Calu3 (cell line): ENCODE measurements at regions of chr4 and their contacts with region 1.

Region 1: GRCh38 chr4:176054942-176055341 is 10.7 kb upstream of the WDR17 start:
- DNase-seq: no peak
- H3K4me3 Mint-ChIP-seq: no peak overlapping the region
- H3K27ac Mint-ChIP-seq: no peak overlapping the region
- H3K4me1 Mint-ChIP-seq: no peaks in the 10 kb centered on the region
- H3K27me3 Mint-ChIP-seq: no peaks in the 10 kb centered on the region
- CTCF ChIP-seq: no peak

Region 2: DNA sequence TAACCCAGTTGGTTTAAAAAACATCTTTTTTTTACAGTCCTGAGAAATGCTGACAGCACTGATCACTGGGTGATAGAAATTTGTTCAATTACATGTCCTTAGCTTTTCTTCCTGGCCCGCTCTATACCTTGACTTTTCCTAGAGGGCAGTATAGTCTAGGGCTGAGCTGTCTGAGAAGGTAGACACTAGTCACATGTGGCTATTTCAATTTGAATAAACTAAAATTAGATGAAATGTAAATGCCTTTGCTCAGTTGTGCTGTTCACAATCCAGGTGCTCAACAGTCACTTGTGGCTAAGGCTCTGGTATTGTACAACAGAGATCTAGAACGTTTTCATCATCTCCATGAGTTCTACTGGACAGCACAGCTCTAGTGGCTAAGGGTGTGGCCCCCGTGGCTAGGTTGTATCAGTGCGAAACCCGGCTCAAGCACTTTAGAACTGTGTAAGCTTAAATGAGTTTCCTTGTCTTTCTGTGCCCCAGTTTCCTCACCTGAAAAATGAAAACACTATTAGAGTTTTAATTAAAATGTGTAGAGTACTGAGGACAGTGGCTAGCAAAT is 100.9 kb before region 1 on chr4:
- CTCF ChIA-PET with region 1: no interaction called
- intact Hi-C with region 1: loop called (anchors 10 kb)
- DNase-seq: no peak
- H3K4me3 Mint-ChIP-seq: no peak overlapping the region
- H3K27ac Mint-ChIP-seq: no peak overlapping the region
- H3K4me1 Mint-ChIP-seq: peaks cover 8% of the 10 kb centered on the region
- H3K27me3 Mint-ChIP-seq: no peaks in the 10 kb centered on the region
- CTCF ChIP-seq: no peak

Region 3: DNA sequence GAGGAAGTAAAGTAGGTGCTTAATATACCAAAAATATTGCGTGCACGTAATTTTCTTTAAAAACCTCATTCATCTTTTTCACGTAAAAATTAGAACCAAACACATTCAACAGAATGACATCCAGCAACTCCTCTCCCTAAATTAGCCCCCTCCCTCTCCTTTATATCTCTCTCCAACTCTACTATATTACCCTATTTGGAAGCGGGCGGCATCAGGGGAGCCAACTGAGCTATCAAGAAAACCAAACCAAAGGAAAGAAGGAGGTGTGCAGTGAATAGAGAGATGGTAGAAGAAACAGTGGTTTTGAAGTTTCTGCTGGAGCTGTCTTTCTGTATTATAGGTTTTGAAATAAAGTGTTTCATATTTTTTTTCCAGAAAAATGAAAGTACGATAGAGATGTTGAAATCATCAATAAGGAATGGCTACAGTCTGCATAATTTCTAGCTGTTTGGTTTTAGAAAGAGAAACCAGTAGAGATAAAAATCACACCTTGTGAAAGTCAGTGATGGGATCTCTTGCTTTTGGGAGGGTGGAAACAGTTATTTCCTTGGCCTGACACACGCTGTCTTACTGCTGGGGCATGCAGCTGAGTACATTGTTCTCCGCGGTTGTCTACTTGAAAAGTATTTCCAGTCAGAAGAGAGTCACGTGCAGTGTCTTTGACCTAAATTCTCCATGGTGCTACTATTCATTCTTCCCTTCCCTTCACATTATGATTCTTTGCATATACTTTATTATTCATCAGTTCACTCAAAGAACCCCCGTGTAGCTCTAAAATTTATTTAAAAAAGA is 83.4 kb before region 1 on chr4:
- CTCF ChIA-PET with region 1: no interaction called
- intact Hi-C with region 1: no loop called
- DNase-seq: no peak
- H3K4me3 Mint-ChIP-seq: no peak overlapping the region
- H3K27ac Mint-ChIP-seq: no peak overlapping the region
- H3K4me1 Mint-ChIP-seq: no peaks in the 10 kb centered on the region
- H3K27me3 Mint-ChIP-seq: no peaks in the 10 kb centered on the region
- CTCF ChIP-seq: no peak

Region 4: GRCh38 chr4:176549161-176549865 is 494.4 kb after region 1 on chr4:
- CTCF ChIA-PET with region 1: interaction called, 11 read pairs
- intact Hi-C with region 1: no loop called
- DNase-seq: no peak
- H3K4me3 Mint-ChIP-seq: no peak overlapping the region
- H3K27ac Mint-ChIP-seq: no peak overlapping the region
- H3K4me1 Mint-ChIP-seq: peaks cover 16% of the 10 kb centered on the region
- H3K27me3 Mint-ChIP-seq: no peaks in the 10 kb centered on the region
- CTCF ChIP-seq: no peak